ENCODE measurements at regions of chr13 and their contacts with region 1.

Region 1: DNA sequence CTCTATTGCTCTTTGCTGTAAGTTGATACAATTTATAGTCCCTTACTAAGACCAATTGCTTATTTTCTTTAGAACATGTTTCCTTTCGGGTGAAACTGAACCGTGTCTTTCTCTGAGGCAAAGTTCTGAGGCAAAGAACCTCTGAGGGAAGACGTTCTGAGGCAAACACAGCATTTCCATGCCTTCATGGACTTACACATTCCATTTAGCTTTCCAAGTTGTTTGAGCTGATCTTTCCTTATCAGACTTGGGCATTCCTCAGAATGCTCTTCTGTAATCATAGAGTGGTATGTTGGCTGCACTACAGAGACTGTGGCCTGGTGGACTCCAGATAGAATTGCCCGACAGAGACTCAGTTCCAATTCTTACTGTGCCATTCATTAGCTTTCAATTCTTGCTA is 579.1 kb downstream of the KCTD12 start:
- DNase-seq: peak; percentile 20
- H3K4me3 ChIP-seq: no peak overlapping the region
- H3K27ac ChIP-seq: no peak overlapping the region
- H3K27me3 ChIP-seq: no peaks in the 10 kb centered on the region
- CTCF ChIP-seq: 0 out of 2 replicates have a peak, but pooled peaks have one; percentile 10

Region 2: DNA sequence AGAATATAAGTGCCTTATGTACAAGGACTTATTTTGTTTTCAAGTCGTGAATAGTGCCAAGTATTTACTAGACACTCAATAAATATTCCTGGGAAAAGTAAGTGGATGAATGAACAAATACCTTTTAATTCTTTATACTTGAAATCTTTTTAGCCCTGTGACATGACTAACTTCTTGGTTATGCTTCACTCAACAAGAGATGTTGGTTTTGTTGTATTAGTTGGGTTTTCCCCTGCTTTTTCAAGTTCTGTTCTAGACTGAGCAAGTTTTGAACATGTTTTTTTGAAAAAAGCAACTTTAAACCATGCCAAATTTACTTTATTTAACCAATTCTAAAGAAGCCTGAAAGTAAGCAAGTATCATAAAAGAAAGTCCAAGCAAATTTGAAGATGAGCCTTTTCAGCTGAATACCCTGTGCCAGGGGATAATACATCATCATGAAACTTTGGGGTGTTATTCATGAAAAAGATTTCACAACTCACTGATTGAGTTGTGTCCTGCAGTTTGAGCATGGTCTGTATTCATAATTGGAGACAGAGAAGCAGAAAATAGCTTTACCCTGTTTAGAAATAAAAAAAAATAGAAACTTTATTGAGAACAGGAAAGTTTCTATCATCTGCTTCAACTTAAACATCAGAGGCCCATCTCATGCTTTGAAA is 659.9 kb before region 1 on chr13:
- CTCF ChIA-PET with region 1: no interaction called
- POLR2A ChIA-PET with region 1: no interaction called
- DNase-seq: no peak
- H3K4me3 ChIP-seq: no peak overlapping the region
- H3K27ac ChIP-seq: no peak overlapping the region
- H3K27me3 ChIP-seq: no peaks in the 10 kb centered on the region
- CTCF ChIP-seq: no peak

Region 3: GRCh38 chr13:75825594-75825993 is 481.5 kb before region 1 on chr13:
- CTCF ChIA-PET with region 1: no interaction called
- POLR2A ChIA-PET with region 1: no interaction called
- DNase-seq: no peak
- H3K4me3 ChIP-seq: no peak overlapping the region
- H3K27ac ChIP-seq: no peak overlapping the region
- H3K27me3 ChIP-seq: no peaks in the 10 kb centered on the region
- CTCF ChIP-seq: no peak

Region 4: GRCh38 chr13:76116751-76117360 is 190.3 kb before region 1 on chr13:
- CTCF ChIA-PET with region 1: no interaction called
- POLR2A ChIA-PET with region 1: no interaction called
- DNase-seq: no peak
- H3K4me3 ChIP-seq: no peak overlapping the region
- H3K27ac ChIP-seq: no peak overlapping the region
- H3K27me3 ChIP-seq: no peaks in the 10 kb centered on the region
- CTCF ChIP-seq: no peak

Region 5: GRCh38 chr13:76326343-76326742 is 19.2 kb after region 1 on chr13:
- CTCF ChIA-PET with region 1: interaction called, 13 read pairs
- POLR2A ChIA-PET with region 1: no interaction called
- DNase-seq: no peak
- H3K4me3 ChIP-seq: no peak overlapping the region
- H3K27ac ChIP-seq: no peak overlapping the region
- H3K27me3 ChIP-seq: peaks cover 2% of the 10 kb centered on the region
- CTCF ChIP-seq: no peak